ENCODE measurements at regions of chr10 and their contacts with region 1.

Region 1: GRCh38 chr10:123154092-123154921 is at the start of gene BUB3:
- DNase-seq: peak; percentile 97
- ATAC-seq: peak; percentile 94
- H3K4me3 ChIP-seq: peak within 1 kb of the TSS; percentile 100
- H3K27ac ChIP-seq: peak within 1 kb of the TSS; percentile 87
- H3K4me1 ChIP-seq: peaks cover 36% of the 10 kb centered on the region
- H3K27me3 ChIP-seq: no peaks in the 10 kb centered on the region
- CTCF ChIP-seq: no peak
- total RNA-seq, gene BUB3: 271 and 291 TPM in 2 replicates

Region 2: DNA sequence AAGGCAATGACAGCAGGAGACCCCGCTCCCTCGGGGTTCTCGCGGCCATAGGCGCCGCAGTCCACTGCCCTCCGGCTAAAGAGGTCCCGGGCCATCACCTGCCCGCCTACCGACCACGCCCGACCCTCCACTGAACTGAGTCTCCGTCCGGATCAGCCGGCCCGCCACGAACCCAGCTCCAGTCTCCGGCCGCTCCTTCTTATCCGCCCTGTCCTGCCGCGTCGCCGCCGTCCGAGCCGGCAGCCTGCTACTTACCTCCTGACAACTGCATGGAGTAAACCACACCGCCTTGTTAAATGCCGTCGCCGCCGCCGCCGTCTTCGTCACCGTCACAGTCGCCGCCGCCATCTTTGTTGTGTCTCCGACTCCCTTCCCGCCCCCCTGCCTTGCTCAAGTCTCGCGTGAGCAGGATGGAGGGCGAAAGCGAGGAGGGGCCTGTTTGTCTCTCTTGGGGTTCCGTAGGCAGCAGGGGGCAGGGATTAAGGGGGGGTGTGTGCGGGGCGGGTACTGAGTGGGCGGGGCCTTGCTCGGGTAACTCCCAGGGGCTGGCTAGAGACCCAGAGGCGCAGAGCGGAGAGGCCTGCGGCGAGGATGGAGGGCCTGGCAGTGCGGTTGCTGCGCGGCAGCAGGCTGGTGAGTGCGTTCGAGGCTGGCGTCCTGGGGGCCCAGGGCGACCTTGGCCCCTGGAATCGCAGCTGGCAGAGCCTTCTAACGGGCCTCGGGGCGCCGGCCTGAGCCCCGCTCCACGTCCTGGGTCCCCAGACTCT is 145.7 kb before region 1 on chr10 and contains the starts of genes ACADSB and IKZF5:
- CTCF ChIA-PET with region 1: no interaction called
- POLR2A ChIA-PET with region 1: no interaction called
- intact Hi-C with region 1: loop called (anchors 2 kb)
- DNase-seq: peak; percentile 89
- ATAC-seq: peak; percentile 85
- H3K4me3 ChIP-seq: peak within 1 kb of the TSS; percentile 99
- H3K27ac ChIP-seq: peak within 1 kb of the TSS; percentile 51
- H3K4me1 ChIP-seq: peaks cover 12% of the 10 kb centered on the region
- H3K27me3 ChIP-seq: no peaks in the 10 kb centered on the region
- CTCF ChIP-seq: no peak
- total RNA-seq, gene ACADSB: 2.8 and 3.2 TPM in 2 replicates
- total RNA-seq, gene IKZF5: 1.6 TPM in 2 replicates

Region 3: DNA sequence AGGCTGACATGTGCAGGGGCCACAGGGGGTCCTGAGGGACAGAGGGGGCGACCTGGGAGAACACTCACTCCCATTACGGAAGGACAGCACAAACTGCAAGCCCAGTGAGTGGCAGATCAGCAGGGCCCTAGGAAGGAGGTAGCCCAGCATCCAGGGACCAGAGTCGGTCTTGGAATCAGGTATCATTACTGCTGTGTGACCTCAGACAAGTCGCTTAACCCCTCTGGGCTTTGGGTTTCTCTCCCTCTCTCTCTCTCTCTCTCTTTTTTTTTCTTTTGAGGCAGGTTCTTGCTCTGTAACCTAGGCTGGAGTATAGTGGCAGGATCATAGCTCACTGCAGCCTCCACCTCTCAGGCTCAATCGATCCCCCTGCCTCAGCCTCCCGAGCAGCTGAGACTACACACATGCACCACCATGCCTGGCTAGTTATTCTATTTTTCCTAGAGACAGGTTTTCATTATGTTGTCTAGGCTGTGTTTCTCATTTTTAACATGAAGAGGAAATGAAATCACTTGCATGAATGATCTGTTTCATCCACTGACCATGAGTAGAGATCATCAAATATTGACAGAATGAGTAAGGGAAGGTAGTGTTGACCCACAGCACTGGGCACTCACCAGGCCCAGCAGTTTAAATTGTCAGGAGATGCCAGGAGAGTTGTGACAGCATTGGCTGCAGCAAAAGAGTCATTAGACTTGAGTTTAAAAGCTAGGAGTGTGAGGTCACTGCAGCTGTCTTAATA is 49.3 kb after region 1 on chr10:
- CTCF ChIA-PET with region 1: no interaction called
- POLR2A ChIA-PET with region 1: no interaction called
- intact Hi-C with region 1: loop called (anchors 2 kb)
- DNase-seq: peak; percentile 90
- ATAC-seq: peak; percentile 97
- H3K4me3 ChIP-seq: no peak overlapping the region
- H3K27ac ChIP-seq: peak overlapping the region; percentile 97
- H3K4me1 ChIP-seq: peaks cover 34% of the 10 kb centered on the region
- H3K27me3 ChIP-seq: no peaks in the 10 kb centered on the region
- CTCF ChIP-seq: no peak

Region 4: DNA sequence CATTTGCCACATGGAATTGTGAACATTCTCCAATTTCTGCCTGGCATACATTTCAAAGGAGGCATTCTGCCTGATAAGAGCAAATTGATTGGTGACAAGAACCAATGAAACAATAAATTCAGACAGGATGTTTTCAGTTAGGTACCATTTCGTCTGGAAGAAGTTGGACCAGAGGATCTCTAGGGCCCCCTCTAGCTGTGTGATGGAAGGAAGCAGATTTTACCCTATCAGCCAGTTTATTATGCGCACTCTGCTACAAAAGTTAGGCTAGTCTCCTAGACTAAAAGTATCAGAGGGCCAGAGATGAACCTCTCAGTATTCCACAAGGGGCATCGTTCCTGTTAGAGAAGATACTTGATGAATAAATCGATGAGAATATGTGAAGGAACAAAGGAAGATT is 117.9 kb after region 1 on chr10:
- CTCF ChIA-PET with region 1: no interaction called
- POLR2A ChIA-PET with region 1: no interaction called
- intact Hi-C with region 1: loop called (anchors 5 kb)
- DNase-seq: peak; percentile 25
- ATAC-seq: no peak
- H3K4me3 ChIP-seq: no peak overlapping the region
- H3K27ac ChIP-seq: no peak overlapping the region
- H3K4me1 ChIP-seq: peaks cover 13% of the 10 kb centered on the region; the same call in 1 of the 2 replicates
- H3K27me3 ChIP-seq: no peaks in the 10 kb centered on the region
- CTCF ChIP-seq: peak; percentile 49

Region 5: DNA sequence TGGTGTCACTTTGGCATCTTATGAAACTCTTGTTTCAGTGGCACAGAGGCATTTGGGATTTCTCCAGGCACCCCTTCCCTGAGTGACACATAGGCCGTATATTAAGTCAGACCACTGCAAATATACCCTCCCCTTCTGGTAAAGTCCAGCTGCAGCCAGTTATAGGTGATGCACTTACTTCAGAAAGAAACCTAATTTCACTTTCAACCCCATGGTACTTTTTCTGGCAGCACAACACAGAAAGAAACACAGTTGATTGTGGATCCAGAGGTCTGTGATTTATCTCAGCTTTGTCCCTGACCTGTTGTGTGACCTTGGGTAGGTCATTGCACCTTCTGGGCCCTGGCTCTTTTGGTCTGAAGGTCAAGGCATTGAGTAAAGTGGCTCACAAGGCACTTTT is 173.1 kb after region 1 on chr10:
- CTCF ChIA-PET with region 1: no interaction called
- POLR2A ChIA-PET with region 1: no interaction called
- intact Hi-C with region 1: no loop called
- DNase-seq: no peak
- ATAC-seq: no peak
- H3K4me3 ChIP-seq: no peak overlapping the region
- H3K27ac ChIP-seq: no peak overlapping the region
- H3K4me1 ChIP-seq: peaks cover 10% of the 10 kb centered on the region
- H3K27me3 ChIP-seq: no peaks in the 10 kb centered on the region
- CTCF ChIP-seq: no peak